ENCODE measurements at regions of chr10 and their contacts with region 1.

Region 1: DNA sequence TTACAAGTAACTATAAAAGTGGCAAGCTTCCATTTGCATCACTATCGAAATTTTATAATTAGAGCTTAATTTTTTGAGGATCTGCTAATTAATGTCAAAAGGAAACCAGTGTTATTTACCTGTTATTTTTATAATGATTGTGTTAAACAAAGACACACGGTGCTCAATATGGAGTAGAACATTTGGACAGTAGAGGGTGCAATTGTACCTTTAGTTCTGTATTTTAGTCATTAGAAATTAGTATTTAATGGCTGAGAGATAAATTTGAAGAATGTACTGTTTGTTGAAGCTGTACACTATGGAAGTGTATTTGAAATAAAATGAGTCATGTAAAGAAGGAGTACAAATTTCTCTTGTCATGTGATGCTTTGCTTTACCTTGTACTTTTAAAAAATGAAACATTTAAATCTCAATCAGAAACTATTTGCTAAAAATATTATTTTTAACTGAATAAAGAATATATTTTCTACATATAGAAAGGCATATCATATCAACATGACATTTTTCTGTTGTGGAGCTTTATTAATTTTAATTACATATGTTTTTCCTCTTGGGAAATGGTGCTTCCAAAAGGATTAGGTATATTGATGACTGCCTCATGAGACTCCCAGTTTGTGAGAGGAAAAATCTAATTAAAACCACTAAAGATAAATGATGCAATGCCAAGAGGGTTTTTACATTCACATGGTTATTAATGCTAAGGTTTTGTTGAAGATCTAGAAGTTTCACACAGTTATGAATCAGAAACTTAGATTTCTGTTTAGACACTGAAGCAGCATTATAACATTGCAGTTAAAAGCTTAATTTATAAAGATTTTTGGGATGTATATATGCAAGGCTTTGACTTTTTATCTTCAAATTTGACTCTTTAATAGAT is 10.4 kb upstream of the PRKG1 start:
- DNase-seq: peak; percentile 13
- ATAC-seq: peak; percentile 69
- H3K4me3 ChIP-seq: no peak overlapping the region
- H3K27ac ChIP-seq: no peak overlapping the region
- H3K4me1 ChIP-seq: no peaks in the 10 kb centered on the region
- H3K27me3 ChIP-seq: peaks cover 21% of the 10 kb centered on the region; the same call in 1 of the 2 replicates
- CTCF ChIP-seq: peak; percentile 63; the same call in 1 of the 2 replicates

Region 2: DNA sequence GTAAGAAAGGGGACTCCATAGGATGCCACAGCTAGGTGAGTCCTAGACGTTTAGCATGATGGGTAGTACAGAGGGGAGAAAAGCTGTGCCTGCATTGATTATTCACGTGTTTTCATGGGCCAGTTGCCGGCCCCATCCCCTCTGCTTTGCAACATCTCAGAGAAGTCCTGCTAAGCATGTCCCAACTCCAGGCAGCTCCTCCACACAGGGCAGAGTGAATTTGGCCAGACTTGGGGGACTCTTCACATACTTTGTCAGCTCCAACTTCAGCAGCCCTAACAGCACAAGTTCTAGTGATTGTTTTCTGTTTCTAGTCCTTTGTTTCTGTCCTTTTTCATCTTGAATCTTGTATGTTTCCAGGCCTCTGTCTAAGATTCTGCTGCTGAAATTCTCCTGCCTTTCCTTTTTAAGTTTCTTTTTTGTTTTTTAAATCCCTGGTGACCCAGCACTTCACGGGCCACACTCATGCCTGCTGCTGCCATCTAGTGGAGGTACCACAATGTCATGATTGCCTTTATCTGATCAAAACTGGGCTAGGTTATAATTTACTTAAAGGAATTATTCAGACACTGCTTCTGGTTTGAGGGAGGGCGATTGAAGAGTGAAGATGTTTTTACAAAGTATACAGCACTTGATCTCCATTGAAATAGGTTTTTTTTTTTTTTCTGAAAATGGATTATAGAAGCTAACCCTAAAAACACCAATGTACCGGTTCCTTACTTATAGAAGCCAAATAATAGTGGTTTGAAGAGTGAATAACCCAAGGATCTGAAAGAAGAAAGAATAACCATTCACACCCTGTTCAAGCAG is 358.6 kb after region 1 on chr10:
- CTCF ChIA-PET with region 1: no interaction called
- POLR2A ChIA-PET with region 1: no interaction called
- in situ Hi-C with region 1: no loop called
- intact Hi-C with region 1: loop called (anchors 2 kb)
- DNase-seq: peak; percentile 12
- ATAC-seq: no peak
- H3K4me3 ChIP-seq: no peak overlapping the region
- H3K27ac ChIP-seq: no peak overlapping the region
- H3K4me1 ChIP-seq: no peaks in the 10 kb centered on the region
- H3K27me3 ChIP-seq: no peaks in the 10 kb centered on the region
- CTCF ChIP-seq: peak; percentile 77

Region 3: GRCh38 chr10:51960494-51960895 is 896.6 kb after region 1 on chr10:
- CTCF ChIA-PET with region 1: no interaction called
- POLR2A ChIA-PET with region 1: no interaction called
- in situ Hi-C with region 1: no loop called
- intact Hi-C with region 1: loop called (anchors 10 kb)
- DNase-seq: peak; percentile 8
- ATAC-seq: peak; percentile 73; the same call in 1 of the 2 replicates
- H3K4me3 ChIP-seq: no peak overlapping the region
- H3K27ac ChIP-seq: no peak overlapping the region
- H3K4me1 ChIP-seq: no peaks in the 10 kb centered on the region
- H3K27me3 ChIP-seq: peaks cover 6% of the 10 kb centered on the region
- CTCF ChIP-seq: peak; percentile 76

Region 4: DNA sequence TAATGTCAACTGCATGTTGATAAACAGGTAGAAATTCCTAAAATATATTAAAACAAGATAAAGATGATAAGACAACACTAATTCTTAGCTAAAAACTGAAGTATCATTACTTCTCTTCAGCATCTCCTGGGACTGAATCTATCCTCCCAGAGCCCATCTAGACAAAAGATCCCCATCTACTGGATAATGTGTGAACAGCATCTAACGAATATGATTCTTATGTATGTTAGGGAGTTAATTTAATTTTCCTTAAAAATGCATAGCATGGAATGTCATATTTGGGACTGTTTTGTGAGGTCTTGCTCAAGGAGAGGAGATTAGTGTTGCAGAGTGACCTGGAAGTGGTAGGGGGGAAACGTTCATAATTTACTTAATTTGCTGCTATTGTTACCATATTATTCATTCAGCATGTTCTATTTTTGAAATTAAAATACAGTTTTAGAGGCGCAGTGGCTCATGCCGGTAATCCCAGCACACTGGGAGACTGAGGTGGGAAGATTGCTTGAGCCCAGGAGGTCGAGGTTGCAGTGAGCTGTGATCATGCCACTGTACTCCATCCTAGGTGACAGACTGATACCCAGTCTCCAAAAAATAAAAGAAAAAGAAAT is 940.5 kb after region 1 on chr10:
- CTCF ChIA-PET with region 1: no interaction called
- POLR2A ChIA-PET with region 1: no interaction called
- in situ Hi-C with region 1: no loop called
- intact Hi-C with region 1: loop called (anchors 10 kb)
- DNase-seq: peak; percentile 8
- ATAC-seq: peak; percentile 82
- H3K4me3 ChIP-seq: no peak overlapping the region
- H3K27ac ChIP-seq: no peak overlapping the region
- H3K4me1 ChIP-seq: no peaks in the 10 kb centered on the region
- H3K27me3 ChIP-seq: no peaks in the 10 kb centered on the region; the same call in 1 of the 2 replicates
- CTCF ChIP-seq: peak; percentile 80